ENCODE measurements at regions of chr1 and their contacts with region 1.

Region 1: DNA sequence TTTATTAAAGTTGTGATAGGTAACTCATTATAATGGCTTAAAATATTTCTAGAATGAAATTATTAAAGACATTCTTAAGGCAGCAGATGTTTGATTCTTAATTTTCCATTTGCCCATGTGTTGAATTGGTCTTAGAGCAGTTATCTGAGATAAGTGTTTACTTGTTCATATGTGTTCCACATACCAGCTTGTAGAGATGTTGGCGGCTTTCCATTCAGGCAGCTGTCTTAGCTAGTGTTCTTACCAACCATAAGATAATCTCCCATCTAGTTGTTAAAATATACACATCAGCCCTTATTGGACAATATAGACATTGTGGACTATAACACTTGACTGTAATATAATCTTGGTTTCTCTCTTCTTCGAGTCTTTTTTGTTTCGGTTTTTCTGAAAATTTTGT is 1372.9 kb upstream of the ADGRL2 start:
- DNase-seq: no peak
- H3K4me3 Mint-ChIP-seq: no peak overlapping the region
- H3K27ac Mint-ChIP-seq: no peak overlapping the region
- H3K4me1 Mint-ChIP-seq: no peaks in the 10 kb centered on the region
- H3K27me3 Mint-ChIP-seq: no peaks in the 10 kb centered on the region
- CTCF ChIP-seq: no peak

Region 2: DNA sequence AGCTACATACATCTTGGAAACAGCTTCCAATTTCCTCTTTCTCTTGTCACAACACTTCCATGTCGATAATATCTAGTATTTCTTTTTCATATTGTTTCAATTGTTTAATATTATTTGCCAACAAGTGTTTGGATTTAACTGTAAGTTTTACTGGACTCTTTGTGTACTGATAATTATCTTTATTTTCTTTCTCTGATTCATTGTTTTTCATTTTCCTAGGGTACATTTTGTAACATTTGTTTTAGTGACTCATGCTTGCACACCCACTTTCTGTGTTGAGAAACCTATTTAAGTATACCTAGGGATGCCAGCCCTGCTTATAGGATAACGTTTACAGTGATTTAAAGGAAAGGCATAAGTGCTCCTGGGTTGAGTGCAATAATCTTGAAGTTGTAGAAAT is 35.4 kb before region 1 on chr1:
- CTCF ChIA-PET with region 1: no interaction called
- intact Hi-C with region 1: loop called (anchors 1 kb)
- DNase-seq: peak; percentile 1
- H3K4me3 Mint-ChIP-seq: no peak overlapping the region
- H3K27ac Mint-ChIP-seq: no peak overlapping the region
- H3K4me1 Mint-ChIP-seq: peaks cover 13% of the 10 kb centered on the region
- H3K27me3 Mint-ChIP-seq: no peaks in the 10 kb centered on the region
- CTCF ChIP-seq: no peak

Region 3: GRCh38 chr1:80498673-80499072 is 70.8 kb after region 1 on chr1:
- CTCF ChIA-PET with region 1: no interaction called
- intact Hi-C with region 1: no loop called
- DNase-seq: no peak
- H3K4me3 Mint-ChIP-seq: no peak overlapping the region
- H3K27ac Mint-ChIP-seq: no peak overlapping the region
- H3K4me1 Mint-ChIP-seq: no peaks in the 10 kb centered on the region
- H3K27me3 Mint-ChIP-seq: no peaks in the 10 kb centered on the region
- CTCF ChIP-seq: no peak